HCT116 (cell line): ENCODE measurements at regions of chr6 and their contacts with region 1.

Region 1: GRCh38 chr6:108294727-108295625 is at the start of gene AFG1L:
- DNase-seq: peak; percentile 76
- ATAC-seq: peak; percentile 93
- H3K4me3 ChIP-seq: peak within 1 kb of the TSS; percentile 67 to 82
- H3K27ac ChIP-seq: peak within 1 kb of the TSS; percentile 78
- H3K4me1 ChIP-seq: peaks cover 5 to 21% of the 10 kb centered on the region in 2 experiments
- H3K27me3 ChIP-seq: no peaks in the 10 kb centered on the region
- CTCF ChIP-seq: no peak
- POLR2A ChIP-seq: no peak
- RAD21 ChIP-seq: no peak
- total RNA-seq, gene AFG1L: 4.9 TPM

Region 2: GRCh38 chr6:108222504-108222903 is 72.5 kb before region 1 on chr6:
- CTCF ChIA-PET with region 1: no interaction called
- POLR2A ChIA-PET with region 1: no interaction called
- RAD21 ChIA-PET with region 1: no interaction called
- intact Hi-C with region 1: loop called (anchors 2 kb)
- DNase-seq: no peak
- ATAC-seq: no peak
- H3K4me3 ChIP-seq: no peak overlapping the region
- H3K27ac ChIP-seq: no peak overlapping the region
- H3K4me1 ChIP-seq: no peaks in the 10 kb centered on the region
- H3K27me3 ChIP-seq: no peaks in the 10 kb centered on the region
- CTCF ChIP-seq: no peak
- POLR2A ChIP-seq: no peak
- RAD21 ChIP-seq: no peak

Region 3: DNA sequence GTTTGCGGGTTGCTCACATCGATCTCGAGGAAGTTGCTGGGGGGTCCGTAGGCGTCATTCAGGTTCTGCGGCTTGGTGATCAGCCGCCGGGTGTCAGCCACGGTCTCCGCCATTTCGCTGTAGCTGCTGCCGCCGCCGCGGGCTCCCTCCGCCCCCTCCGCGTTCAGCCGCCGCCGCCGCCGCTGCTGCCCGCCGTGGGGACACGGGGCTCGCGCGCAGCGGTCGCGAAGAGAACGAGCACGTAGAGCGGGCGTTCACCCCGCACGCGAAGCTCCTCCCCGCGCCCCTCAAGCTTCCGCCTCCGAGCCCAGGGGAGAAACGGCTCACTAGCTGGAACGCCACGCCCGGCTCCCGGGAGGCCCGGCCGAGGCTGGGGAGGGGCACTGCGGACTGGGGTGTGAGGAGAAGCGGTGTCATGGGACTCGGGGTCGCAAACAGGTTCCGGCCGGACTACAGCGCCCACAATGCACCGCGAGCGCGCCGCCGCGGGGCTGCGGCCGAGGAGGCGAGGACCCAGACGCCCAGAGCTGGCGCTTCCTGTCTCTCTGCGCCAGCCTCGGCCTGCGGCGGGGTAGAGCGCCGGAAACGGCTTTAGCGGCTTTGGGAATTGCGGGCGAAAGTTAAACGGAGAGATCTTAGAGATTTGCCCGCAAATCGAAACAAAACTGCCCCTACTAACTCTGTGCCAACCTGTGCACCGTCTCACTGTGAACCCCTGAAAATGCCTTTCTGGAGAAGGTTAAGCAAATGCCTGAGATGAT is 34.0 kb before region 1 on chr6 and contains the start of gene SNX3:
- CTCF ChIA-PET with region 1: no interaction called
- POLR2A ChIA-PET with region 1: interaction called, 6 read pairs
- RAD21 ChIA-PET with region 1: no interaction called
- intact Hi-C with region 1: loop called (anchors 2 kb)
- DNase-seq: peak; percentile 89
- ATAC-seq: peak; percentile 95
- H3K4me3 ChIP-seq: peak within 1 kb of the TSS; percentile 89 to 93
- H3K27ac ChIP-seq: peak within 1 kb of the TSS; percentile 53
- H3K4me1 ChIP-seq: peaks cover 0 to 19% of the 10 kb centered on the region in 2 experiments; a peak in 3 of 4 replicates
- H3K27me3 ChIP-seq: no peaks in the 10 kb centered on the region
- CTCF ChIP-seq: no peak
- POLR2A ChIP-seq: peak; percentile 81
- RAD21 ChIP-seq: no peak
- total RNA-seq, gene SNX3: 111 TPM